Naive thymus-derived CD4-positive, alpha-beta T cell (primary cell): ENCODE measurements at regions of chr9 and their contacts with region 1.

Region 1: GRCh38 chr9:101533334-101534107 is at the start of gene RNF20:
- DNase-seq: peak; percentile 96 to 100 (median 99)
- ATAC-seq: peak; percentile 95
- H3K4me3 ChIP-seq: peak within 1 kb of the TSS; percentile 96
- H3K4me3 Mint-ChIP-seq: peak within 1 kb of the TSS; percentile 89 to 98 (median 94)
- H3K27ac ChIP-seq: peak within 1 kb of the TSS; percentile 99
- H3K27ac Mint-ChIP-seq: peak within 1 kb of the TSS; percentile 93 to 99 (median 99)
- H3K4me1 ChIP-seq: peaks cover 20 to 24% of the 10 kb centered on the region in 2 donors
- H3K4me1 Mint-ChIP-seq: peaks cover 14 to 20% (median 18%) of the 10 kb centered on the region in 7 donors
- H3K27me3 ChIP-seq: no peaks in the 10 kb centered on the region
- H3K27me3 Mint-ChIP-seq: peaks cover 0 to 5% (median 4%) of the 10 kb centered on the region in 5 donors
- total RNA-seq, gene RNF20: 30.5 to 67.8 (median 45.9) TPM

Region 2: GRCh38 chr9:100098887-100099721 is 1434.4 kb before region 1 on chr9 and contains the starts of genes ERP44 and INVS:
- CTCF ChIA-PET with region 1: no interaction called
- POLR2A ChIA-PET with region 1: no interaction called
- intact Hi-C with region 1: loop called in 1 of 2 experiments (anchors 1 kb)
- DNase-seq: peak; percentile 82 to 98 (median 94)
- ATAC-seq: peak; percentile 99
- H3K4me3 ChIP-seq: peak within 1 kb of the TSS; percentile 93
- H3K4me3 Mint-ChIP-seq: peak within 1 kb of the TSS; percentile 94 to 100 (median 98)
- H3K27ac ChIP-seq: peak within 1 kb of the TSS; percentile 89
- H3K27ac Mint-ChIP-seq: peak within 1 kb of the TSS; percentile 84 to 99 (median 97)
- H3K4me1 ChIP-seq: peaks cover 18 to 25% of the 10 kb centered on the region in 2 donors
- H3K4me1 Mint-ChIP-seq: peaks cover 26 to 53% (median 43%) of the 10 kb centered on the region in 7 donors
- H3K27me3 ChIP-seq: no peaks in the 10 kb centered on the region
- H3K27me3 Mint-ChIP-seq: no peaks in the 10 kb centered on the region
- total RNA-seq, gene ERP44: 9.8 to 19.5 (median 15.2) TPM
- total RNA-seq, gene INVS: 15.0 to 20.8 (median 20.6) TPM

Region 3: GRCh38 chr9:100411472-100412283 is 1121.8 kb before region 1 on chr9:
- CTCF ChIA-PET with region 1: no interaction called
- POLR2A ChIA-PET with region 1: no interaction called
- intact Hi-C with region 1: loop called in 1 of 2 experiments (anchors 5 kb)
- DNase-seq: peak; percentile 58 to 87 (median 80)
- ATAC-seq: peak; percentile 100
- H3K4me3 ChIP-seq: peak overlapping the region; percentile 91
- H3K4me3 Mint-ChIP-seq: peak overlapping the region; percentile 83 to 98 (median 89)
- H3K27ac ChIP-seq: peak overlapping the region; percentile 55
- H3K27ac Mint-ChIP-seq: peak overlapping the region; percentile 56 to 90 (median 84)
- H3K4me1 ChIP-seq: peaks cover 10 to 15% of the 10 kb centered on the region in 2 donors
- H3K4me1 Mint-ChIP-seq: peaks cover 10 to 16% (median 13%) of the 10 kb centered on the region in 7 donors
- H3K27me3 ChIP-seq: no peaks in the 10 kb centered on the region
- H3K27me3 Mint-ChIP-seq: peaks cover 6 to 21% (median 15%) of the 10 kb centered on the region in 5 donors

Region 4: GRCh38 chr9:101311758-101312420 is 221.6 kb before region 1 on chr9:
- CTCF ChIA-PET with region 1: no interaction called
- POLR2A ChIA-PET with region 1: no interaction called
- intact Hi-C with region 1: loop called in 1 of 2 experiments (anchors 2 kb)
- DNase-seq: peak in 7 of 9 donors; percentile 17 to 58 (median 54)
- ATAC-seq: peak; percentile 71
- H3K4me3 ChIP-seq: no peak overlapping the region
- H3K4me3 Mint-ChIP-seq: no peak overlapping the region
- H3K27ac ChIP-seq: no peak overlapping the region
- H3K27ac Mint-ChIP-seq: peak overlapping the region in 1 of 9 donors; percentile 39
- H3K4me1 ChIP-seq: no peaks in the 10 kb centered on the region
- H3K4me1 Mint-ChIP-seq: no peaks in the 10 kb centered on the region
- H3K27me3 ChIP-seq: no peaks in the 10 kb centered on the region
- H3K27me3 Mint-ChIP-seq: peaks cover 0 to 22% (median 7%) of the 10 kb centered on the region in 5 donors

Region 5: GRCh38 chr9:101449140-101449721 is 84.3 kb before region 1 on chr9:
- CTCF ChIA-PET with region 1: interaction called, 4 read pairs
- POLR2A ChIA-PET with region 1: no interaction called
- intact Hi-C with region 1: loop called in 1 of 2 experiments (anchors 2 kb)
- DNase-seq: peak; percentile 1 to 44 (median 30)
- ATAC-seq: peak; percentile 84
- H3K4me3 ChIP-seq: peak overlapping the region; percentile 40
- H3K4me3 Mint-ChIP-seq: peak overlapping the region; percentile 41 to 79 (median 68)
- H3K27ac ChIP-seq: no peak overlapping the region
- H3K27ac Mint-ChIP-seq: no peak overlapping the region
- H3K4me1 ChIP-seq: peaks cover 0 to 6% of the 10 kb centered on the region in 2 donors
- H3K4me1 Mint-ChIP-seq: peaks cover 5 to 11% (median 7%) of the 10 kb centered on the region in 7 donors
- H3K27me3 ChIP-seq: peaks cover 0 to 6% of the 10 kb centered on the region in 2 donors
- H3K27me3 Mint-ChIP-seq: peaks cover 60 to 76% (median 71%) of the 10 kb centered on the region in 5 donors

Region 6: GRCh38 chr9:101566904-101567724 is 33.6 kb after region 1 on chr9:
- CTCF ChIA-PET with region 1: interaction called, 7 read pairs
- POLR2A ChIA-PET with region 1: interaction called, 15 read pairs
- intact Hi-C with region 1: loop called (anchors 1 to 5 kb)
- DNase-seq: peak in 6 of 9 donors; percentile 15 to 51 (median 44)
- ATAC-seq: no peak
- H3K4me3 ChIP-seq: no peak overlapping the region
- H3K4me3 Mint-ChIP-seq: peak overlapping the region in 2 of 10 donors; percentile 2 to 4
- H3K27ac ChIP-seq: no peak overlapping the region
- H3K27ac Mint-ChIP-seq: peak overlapping the region in 8 of 9 donors; percentile 22 to 98 (median 93)
- H3K4me1 ChIP-seq: peaks cover 4 to 53% of the 10 kb centered on the region in 2 donors
- H3K4me1 Mint-ChIP-seq: peaks cover 22 to 60% (median 54%) of the 10 kb centered on the region in 7 donors
- H3K27me3 ChIP-seq: no peaks in the 10 kb centered on the region
- H3K27me3 Mint-ChIP-seq: no peaks in the 10 kb centered on the region

Region 7: DNA sequence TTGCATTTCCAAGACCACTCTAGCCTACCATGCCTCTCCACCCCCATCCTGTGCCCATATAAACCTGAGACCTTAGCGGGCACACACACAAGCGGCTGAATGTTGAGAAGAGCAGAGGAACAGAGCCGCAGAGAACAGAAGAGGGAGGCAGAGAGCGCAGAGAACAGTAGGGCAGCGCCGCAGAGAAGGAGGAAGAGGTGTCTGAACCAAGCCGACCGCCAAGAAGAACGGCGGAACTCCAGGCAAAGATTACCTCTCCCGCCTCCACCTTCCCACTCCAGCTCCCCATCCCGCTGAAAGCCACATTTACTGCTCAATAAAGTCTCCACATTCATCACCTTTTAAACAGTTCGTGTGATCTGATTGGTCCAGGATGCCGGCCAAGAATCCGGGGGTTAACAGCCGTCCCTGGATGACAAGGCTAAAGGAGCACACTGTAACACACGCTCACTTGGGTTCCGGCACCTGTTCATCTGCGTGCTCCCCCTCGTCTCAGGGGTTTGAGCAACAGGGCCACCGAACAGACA is 171.7 kb after region 1 on chr9:
- CTCF ChIA-PET with region 1: no interaction called
- POLR2A ChIA-PET with region 1: no interaction called
- intact Hi-C with region 1: loop called in 1 of 2 experiments (anchors 1 kb)
- DNase-seq: peak in 6 of 9 donors; percentile 11 to 42 (median 35)
- ATAC-seq: peak; percentile 90
- H3K4me3 ChIP-seq: peak overlapping the region; percentile 49
- H3K4me3 Mint-ChIP-seq: peak overlapping the region; percentile 68 to 93 (median 86)
- H3K27ac ChIP-seq: no peak overlapping the region
- H3K27ac Mint-ChIP-seq: peak overlapping the region in 6 of 9 donors; percentile 9 to 78 (median 64)
- H3K4me1 ChIP-seq: peaks cover 0 to 3% of the 10 kb centered on the region in 2 donors
- H3K4me1 Mint-ChIP-seq: peaks cover 5 to 26% (median 13%) of the 10 kb centered on the region in 7 donors
- H3K27me3 ChIP-seq: no peaks in the 10 kb centered on the region
- H3K27me3 Mint-ChIP-seq: peaks cover 0 to 19% (median 10%) of the 10 kb centered on the region in 5 donors